AG04450 (cell line): ENCODE measurements at regions of chr6 and their contacts with region 1.

Region 1: DNA sequence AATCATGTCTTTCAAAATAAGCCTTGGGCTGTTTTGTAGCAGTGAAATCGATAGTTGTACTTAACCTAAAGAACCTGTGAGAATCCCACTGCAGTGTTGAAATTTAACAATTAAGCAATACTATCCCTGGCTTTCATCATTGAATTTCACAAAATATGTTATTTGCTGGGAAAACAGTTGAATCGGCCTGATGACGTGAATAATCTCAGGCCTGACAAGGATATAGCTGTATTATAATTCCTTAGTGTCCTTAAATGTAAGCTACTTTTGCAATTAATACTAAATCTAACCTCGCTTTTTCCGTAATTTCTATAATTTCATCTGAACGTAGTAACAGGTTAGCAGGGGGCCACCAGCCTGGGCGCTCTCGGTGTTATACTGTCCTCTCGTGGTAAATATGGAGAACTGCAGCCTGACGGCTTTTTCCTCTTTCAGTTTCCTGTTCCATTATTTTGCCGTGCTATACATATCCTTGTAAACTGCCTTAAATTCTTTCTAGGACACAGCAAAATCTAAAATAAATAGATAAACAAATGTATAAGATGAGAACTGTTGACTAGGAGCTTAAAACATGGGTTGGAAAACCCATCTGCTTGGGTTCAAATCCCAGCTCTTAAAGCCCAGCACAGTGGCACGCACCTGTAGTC is 24.0 kb downstream of the MTFR2 start:
- DNase-seq: peak; percentile 29
- H3K4me3 ChIP-seq: no peak overlapping the region
- H3K27ac ChIP-seq: no peak overlapping the region
- H3K27me3 ChIP-seq: no peaks in the 10 kb centered on the region
- CTCF ChIP-seq: peak; percentile 100

Region 2: DNA sequence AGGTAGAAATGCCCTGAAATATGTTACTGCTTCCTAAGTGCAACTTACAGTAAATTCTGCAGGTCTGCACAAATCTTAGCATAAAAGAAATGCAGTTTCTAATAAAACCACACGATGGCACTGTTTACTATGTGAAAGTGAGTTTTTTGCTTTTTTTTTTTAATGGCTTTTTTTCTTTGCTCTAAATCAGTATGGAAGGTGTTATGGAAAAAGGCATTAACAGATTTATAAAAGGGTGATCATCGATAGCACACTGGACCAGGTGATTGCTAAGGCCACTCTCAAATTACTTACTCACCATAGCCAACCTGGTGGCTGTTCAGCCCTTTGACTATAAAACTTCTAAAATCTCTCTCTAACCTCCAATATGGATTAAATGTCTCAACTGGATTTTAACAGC is 774.5 kb before region 1 on chr6:
- CTCF ChIA-PET with region 1: interaction called, 39 read pairs
- POLR2A ChIA-PET with region 1: no interaction called
- DNase-seq: no peak
- H3K4me3 ChIP-seq: no peak overlapping the region
- H3K27ac ChIP-seq: no peak overlapping the region
- H3K27me3 ChIP-seq: no peaks in the 10 kb centered on the region
- CTCF ChIP-seq: peak; percentile 63

Region 3: DNA sequence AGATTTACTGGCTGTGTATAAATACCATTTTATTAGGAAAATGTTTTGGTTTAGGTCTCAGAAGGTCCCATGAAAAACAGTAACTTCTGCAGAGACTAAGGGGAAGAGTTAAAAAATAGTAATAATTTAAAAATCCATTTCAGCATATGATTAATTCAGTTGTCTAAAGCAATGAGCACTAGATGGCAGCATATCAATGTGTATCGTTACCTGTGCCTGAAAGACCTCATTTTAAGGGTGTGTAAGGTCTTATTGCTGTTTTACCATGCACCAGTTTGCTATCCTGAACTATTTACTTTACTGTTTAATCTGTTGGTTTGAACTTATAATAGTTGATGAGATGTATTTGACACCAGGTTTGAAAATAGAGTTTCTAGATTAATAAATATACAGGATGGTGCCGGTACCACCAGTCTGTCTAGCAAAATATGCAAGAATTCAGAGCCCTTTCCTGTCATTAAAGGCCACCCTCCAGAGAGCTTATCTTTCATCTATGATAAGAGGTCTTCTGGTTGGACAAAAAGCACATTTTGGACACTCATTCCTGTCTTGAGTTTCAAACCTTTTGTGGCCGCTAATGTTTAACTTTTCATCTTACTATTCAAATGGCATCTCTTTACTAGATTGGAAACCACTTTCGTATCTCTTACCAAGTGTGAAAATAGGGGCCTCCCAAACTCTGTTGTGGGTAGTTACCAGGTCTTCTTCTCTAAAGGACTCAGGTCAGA is 719.7 kb before region 1 on chr6:
- CTCF ChIA-PET with region 1: interaction called, 37 read pairs
- POLR2A ChIA-PET with region 1: no interaction called
- DNase-seq: no peak
- H3K4me3 ChIP-seq: no peak overlapping the region
- H3K27ac ChIP-seq: no peak overlapping the region
- H3K27me3 ChIP-seq: no peaks in the 10 kb centered on the region
- CTCF ChIP-seq: peak; percentile 58

Region 4: GRCh38 chr6:135675862-135676261 is 550.3 kb before region 1 on chr6:
- CTCF ChIA-PET with region 1: interaction called, 10 read pairs
- POLR2A ChIA-PET with region 1: no interaction called
- DNase-seq: no peak
- H3K4me3 ChIP-seq: no peak overlapping the region
- H3K27ac ChIP-seq: no peak overlapping the region
- H3K27me3 ChIP-seq: no peaks in the 10 kb centered on the region
- CTCF ChIP-seq: peak; percentile 15; the same call in 1 of the 2 replicates

Region 5: GRCh38 chr6:135922174-135922573 is 304.0 kb before region 1 on chr6:
- CTCF ChIA-PET with region 1: interaction called, 10 read pairs
- POLR2A ChIA-PET with region 1: no interaction called
- DNase-seq: peak; percentile 91
- H3K4me3 ChIP-seq: no peak overlapping the region
- H3K27ac ChIP-seq: peak overlapping the region; percentile 62
- H3K27me3 ChIP-seq: no peaks in the 10 kb centered on the region
- CTCF ChIP-seq: no peak

Region 6: DNA sequence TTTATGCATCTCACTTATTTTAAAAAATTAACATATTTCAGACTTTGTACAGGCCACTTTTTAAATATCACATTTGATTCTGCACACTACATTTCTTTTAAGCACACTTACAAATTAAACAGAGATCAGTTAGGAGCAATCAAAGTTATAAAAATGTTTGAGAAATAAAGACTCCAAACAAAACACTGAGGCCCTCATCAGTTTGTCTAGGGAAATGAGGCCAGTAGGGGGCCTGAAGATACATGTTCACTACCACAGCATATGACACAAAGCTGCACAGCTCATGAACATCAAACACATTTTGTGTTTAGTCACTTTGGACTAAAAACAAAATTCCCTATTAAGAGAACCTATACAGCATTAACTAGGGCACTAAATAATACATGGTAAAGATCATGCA is 194.2 kb before region 1 on chr6:
- CTCF ChIA-PET with region 1: interaction called, 11 read pairs
- POLR2A ChIA-PET with region 1: no interaction called
- DNase-seq: no peak
- H3K4me3 ChIP-seq: no peak overlapping the region
- H3K27ac ChIP-seq: no peak overlapping the region
- H3K27me3 ChIP-seq: no peaks in the 10 kb centered on the region
- CTCF ChIP-seq: peak; percentile 72

Region 7: GRCh38 chr6:136317021-136317694 is 91.0 kb after region 1 on chr6:
- CTCF ChIA-PET with region 1: interaction called, 12 read pairs
- POLR2A ChIA-PET with region 1: no interaction called
- DNase-seq: peak; percentile 48
- H3K4me3 ChIP-seq: no peak overlapping the region
- H3K27ac ChIP-seq: no peak overlapping the region
- H3K27me3 ChIP-seq: peaks cover 3% of the 10 kb centered on the region
- CTCF ChIP-seq: peak; percentile 93